ENCODE measurements at regions of chr6 and their contacts with region 1.

Region 1: GRCh38 chr6:95242560-95242959 is 334.8 kb upstream of the MANEA start:
- DNase-seq: no peak
- ATAC-seq: no peak
- H3K4me3 ChIP-seq: no peak overlapping the region
- H3K27ac ChIP-seq: no peak overlapping the region
- H3K4me1 ChIP-seq: no peaks in the 10 kb centered on the region
- H3K27me3 ChIP-seq: no peaks in the 10 kb centered on the region
- CTCF ChIP-seq: no peak

Region 2: DNA sequence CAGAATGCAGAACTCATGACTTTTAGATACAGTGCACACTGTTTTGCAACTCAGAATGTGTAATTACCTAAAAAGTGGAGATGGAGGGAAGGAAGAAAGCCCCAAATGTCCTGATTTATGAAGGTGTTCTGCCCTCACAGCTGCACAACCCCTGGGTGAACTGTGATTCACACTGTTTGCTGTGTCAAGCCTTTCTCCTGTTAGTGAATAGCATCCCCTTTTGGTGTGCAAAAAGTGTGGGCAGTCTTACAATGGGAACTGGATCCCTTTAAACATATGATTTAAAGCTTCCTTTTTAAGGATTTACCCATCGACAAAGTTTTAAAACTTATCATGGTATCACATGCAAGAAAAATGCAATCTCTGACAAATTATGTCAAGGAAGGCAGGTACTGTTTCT is 1189.8 kb before region 1 on chr6:
- CTCF ChIA-PET with region 1: no interaction called
- POLR2A ChIA-PET with region 1: no interaction called
- in situ Hi-C with region 1: no loop called
- intact Hi-C with region 1: no loop called
- DNase-seq: peak; percentile 10
- ATAC-seq: 0 out of 2 replicates have a peak, but pooled peaks have one; percentile 58
- H3K4me3 ChIP-seq: no peak overlapping the region
- H3K27ac ChIP-seq: no peak overlapping the region; the same call in 1 of the 2 replicates
- H3K4me1 ChIP-seq: no peaks in the 10 kb centered on the region
- H3K27me3 ChIP-seq: no peaks in the 10 kb centered on the region
- CTCF ChIP-seq: peak; percentile 83

Region 3: GRCh38 chr6:95227351-95227750 is 15.2 kb before region 1 on chr6:
- CTCF ChIA-PET with region 1: interaction called, 10 read pairs
- POLR2A ChIA-PET with region 1: no interaction called
- in situ Hi-C with region 1: no loop called
- intact Hi-C with region 1: no loop called
- DNase-seq: no peak
- ATAC-seq: no peak
- H3K4me3 ChIP-seq: no peak overlapping the region
- H3K27ac ChIP-seq: no peak overlapping the region
- H3K4me1 ChIP-seq: no peaks in the 10 kb centered on the region
- H3K27me3 ChIP-seq: no peaks in the 10 kb centered on the region
- CTCF ChIP-seq: no peak

Region 4: DNA sequence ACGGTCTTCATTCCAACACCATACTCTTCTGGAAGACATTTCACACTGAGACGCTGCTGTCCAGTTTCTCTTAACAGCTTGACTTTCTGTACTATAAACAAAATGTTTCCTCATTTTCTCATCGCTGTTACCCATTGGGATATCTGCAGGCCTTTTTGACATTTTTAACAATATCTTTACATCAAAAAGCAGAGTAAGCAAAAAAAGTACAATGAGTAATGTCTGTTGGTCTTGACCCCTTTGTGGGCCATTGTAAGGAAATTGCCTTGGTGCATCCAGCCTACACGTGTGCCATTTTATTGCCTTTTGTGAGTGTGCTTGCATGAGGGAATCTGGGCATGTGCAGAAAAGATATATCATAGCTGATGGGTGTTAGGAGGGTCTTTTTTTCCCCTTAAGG is 205.6 kb after region 1 on chr6:
- CTCF ChIA-PET with region 1: no interaction called
- POLR2A ChIA-PET with region 1: no interaction called
- in situ Hi-C with region 1: no loop called
- intact Hi-C with region 1: no loop called
- DNase-seq: no peak
- ATAC-seq: no peak
- H3K4me3 ChIP-seq: no peak overlapping the region
- H3K27ac ChIP-seq: no peak overlapping the region
- H3K4me1 ChIP-seq: no peaks in the 10 kb centered on the region
- H3K27me3 ChIP-seq: no peaks in the 10 kb centered on the region
- CTCF ChIP-seq: no peak

Region 5: DNA sequence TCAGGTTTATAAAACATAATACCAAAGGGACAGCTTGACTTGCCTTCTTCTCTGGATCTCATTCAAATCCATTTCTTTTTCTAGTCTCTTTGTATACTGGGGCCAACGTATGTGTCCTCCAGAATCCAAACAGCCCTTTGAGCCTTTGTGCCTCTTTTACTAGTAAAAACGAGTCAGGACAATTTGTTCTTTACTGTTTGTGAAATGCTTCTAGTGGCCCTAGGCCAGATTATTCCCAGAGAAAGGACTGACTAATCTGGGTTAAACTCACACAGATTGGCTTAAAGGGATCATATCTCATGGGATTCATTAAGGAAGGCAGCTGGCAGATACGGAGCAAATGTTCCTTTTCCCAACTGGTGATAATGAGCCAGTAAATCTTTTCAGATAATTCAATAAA is 302.7 kb after region 1 on chr6:
- CTCF ChIA-PET with region 1: no interaction called
- POLR2A ChIA-PET with region 1: no interaction called
- in situ Hi-C with region 1: no loop called
- intact Hi-C with region 1: no loop called
- DNase-seq: no peak
- ATAC-seq: no peak
- H3K4me3 ChIP-seq: no peak overlapping the region
- H3K27ac ChIP-seq: no peak overlapping the region
- H3K4me1 ChIP-seq: no peaks in the 10 kb centered on the region
- H3K27me3 ChIP-seq: no peaks in the 10 kb centered on the region
- CTCF ChIP-seq: no peak